Heart right ventricle (tissue), 16 donors: ENCODE measurements at regions of chr12 and their contacts with region 1.

Region 1: GRCh38 chr12:123365025-123365917 is 624 bp upstream of the SBNO1 start:
- DNase-seq: peak; percentile 98
- ATAC-seq: peak; percentile 92 to 97 (median 96)
- H3K4me3 ChIP-seq: peak overlapping the region; percentile 85 to 98 (median 92)
- H3K27ac ChIP-seq: peak overlapping the region; percentile 86 to 99 (median 94)
- H3K4me1 ChIP-seq: peaks cover 3 to 37% (median 33%) of the 10 kb centered on the region in 9 donors
- H3K27me3 ChIP-seq: no peaks in the 10 kb centered on the region
- CTCF ChIP-seq: peak; percentile 54 to 92 (median 70)

Region 2: GRCh38 chr12:123163227-123163626 is 202.0 kb before region 1 on chr12:
- intact Hi-C with region 1: no loop called
- DNase-seq: no peak
- ATAC-seq: no peak
- H3K4me3 ChIP-seq: no peak overlapping the region
- H3K27ac ChIP-seq: no peak overlapping the region
- H3K4me1 ChIP-seq: peaks cover 0 to 4% (median 0%) of the 10 kb centered on the region in 9 donors
- H3K27me3 ChIP-seq: no peaks in the 10 kb centered on the region
- CTCF ChIP-seq: no peak

Region 3: DNA sequence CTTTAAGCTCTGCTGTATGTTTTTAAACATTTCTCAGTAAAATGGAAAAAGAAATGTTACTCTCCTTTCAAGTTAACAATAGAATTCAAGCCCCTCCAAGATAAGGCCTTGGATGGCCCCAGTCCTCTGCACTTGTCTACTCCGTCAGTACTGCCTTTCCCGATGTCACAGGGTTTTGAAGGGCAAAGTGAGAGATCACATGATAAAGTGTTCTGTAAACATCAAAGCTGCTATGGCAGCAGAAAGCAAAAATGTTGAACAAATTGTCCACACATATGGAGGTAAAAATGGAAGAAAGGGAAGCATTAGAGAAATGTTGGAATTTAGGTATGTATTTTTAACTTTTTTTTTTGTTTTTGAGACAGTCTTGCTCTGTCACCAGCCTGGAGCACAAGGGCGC is 60.1 kb before region 1 on chr12:
- intact Hi-C with region 1: no loop called
- DNase-seq: no peak
- ATAC-seq: no peak
- H3K4me3 ChIP-seq: no peak overlapping the region
- H3K27ac ChIP-seq: peak overlapping the region in 1 of 10 donors; percentile 29
- H3K4me1 ChIP-seq: no peaks in the 10 kb centered on the region
- H3K27me3 ChIP-seq: no peaks in the 10 kb centered on the region
- CTCF ChIP-seq: no peak

Region 4: DNA sequence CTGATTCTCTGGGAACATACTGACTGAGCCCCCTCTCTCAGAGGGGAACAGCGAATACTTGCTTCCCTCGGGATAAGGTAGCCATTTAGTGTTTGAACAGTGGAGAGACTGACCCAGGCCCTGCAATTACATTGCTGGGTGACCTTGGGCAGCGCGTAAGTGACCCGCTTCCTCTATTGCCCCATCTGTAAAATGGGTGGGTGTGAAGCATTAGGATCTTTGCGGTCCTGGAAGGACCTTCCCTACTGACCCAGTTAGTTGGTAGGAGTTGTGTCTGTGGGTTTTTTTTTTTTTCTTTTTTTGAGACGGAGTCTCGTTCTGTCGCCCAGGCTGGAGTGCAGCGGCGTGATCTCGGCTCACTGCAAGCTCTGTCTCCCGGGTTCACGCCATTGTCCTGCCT is 17.4 kb after region 1 on chr12:
- intact Hi-C with region 1: loop called in 4 of 10 experiments (anchors 1 to 2 kb)
- DNase-seq: no peak
- ATAC-seq: no peak
- H3K4me3 ChIP-seq: peak overlapping the region in 4 of 10 donors; percentile 70 to 86 (median 82)
- H3K27ac ChIP-seq: peak overlapping the region in 1 of 10 donors; percentile 82
- H3K4me1 ChIP-seq: peaks cover 3 to 35% (median 20%) of the 10 kb centered on the region in 9 donors
- H3K27me3 ChIP-seq: no peaks in the 10 kb centered on the region
- CTCF ChIP-seq: no peak

Region 5: GRCh38 chr12:123601602-123602489 is 236.6 kb after region 1 on chr12 and contains the start of gene DDX55:
- intact Hi-C with region 1: loop called in 1 of 10 experiments (anchors 2 kb)
- DNase-seq: peak; percentile 76 to 85
- ATAC-seq: peak; percentile 97 to 98 (median 98)
- H3K4me3 ChIP-seq: peak within 1 kb of the TSS; percentile 71 to 100 (median 90)
- H3K27ac ChIP-seq: peak within 1 kb of the TSS; percentile 65 to 92 (median 85)
- H3K4me1 ChIP-seq: peaks cover 8 to 26% (median 20%) of the 10 kb centered on the region in 9 donors
- H3K27me3 ChIP-seq: no peaks in the 10 kb centered on the region
- CTCF ChIP-seq: peak in 8 of 9 donors; percentile 46 to 86 (median 64)
- total RNA-seq, gene DDX55: 3.2 to 8.8 (median 4.8) TPM